ENCODE measurements at regions of chr12 and their contacts with region 1.

Region 1: DNA sequence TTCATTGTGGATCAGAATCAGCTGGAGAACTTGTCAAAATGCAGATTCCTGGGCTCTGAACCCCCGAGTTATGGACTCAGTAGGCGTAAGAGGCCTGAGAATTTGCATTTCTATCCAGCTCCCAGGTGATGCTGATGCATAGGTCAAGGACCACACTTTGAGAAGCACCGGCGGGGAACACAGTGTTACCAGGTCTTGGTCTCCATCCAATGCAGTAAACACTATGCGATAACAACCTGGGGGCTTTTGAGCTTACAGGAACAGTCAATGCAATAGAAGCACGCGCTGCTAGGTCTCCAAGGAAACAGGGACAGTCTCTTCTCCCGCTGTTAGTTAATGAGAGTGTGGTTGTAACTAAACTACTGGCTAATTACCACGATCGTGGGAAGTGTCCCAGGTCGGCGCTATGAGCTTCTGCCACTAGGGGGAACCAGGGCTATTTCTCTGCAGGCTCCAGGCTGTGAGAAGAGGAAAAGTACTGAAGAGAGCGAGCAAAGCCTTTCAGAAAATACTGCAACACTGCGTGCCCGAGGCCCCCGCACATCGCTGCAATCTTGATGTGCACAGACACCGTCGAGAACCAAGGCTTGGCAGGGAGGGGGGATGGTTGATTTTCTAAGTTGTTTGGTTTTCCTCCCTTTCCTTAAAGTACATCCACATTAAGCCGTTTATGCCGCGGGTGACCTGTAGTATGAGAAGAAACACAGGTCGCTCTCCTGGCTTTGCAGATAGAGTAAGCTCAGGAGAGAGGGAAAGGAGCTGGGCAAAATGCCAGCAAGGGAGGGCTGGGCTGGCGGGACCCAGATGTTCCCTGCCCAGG is 52.0 kb upstream of the KCNA1 start:
- DNase-seq: peak; percentile 68 to 74
- ATAC-seq: peak; percentile 78 to 90 (median 82)
- H3K4me3 ChIP-seq: peak overlapping the region; percentile 17
- H3K27ac ChIP-seq: no peak overlapping the region
- H3K4me1 ChIP-seq: peaks cover 10% of the 10 kb centered on the region
- H3K27me3 ChIP-seq: no peaks in the 10 kb centered on the region
- CTCF ChIP-seq: peak; percentile 79

Region 2: DNA sequence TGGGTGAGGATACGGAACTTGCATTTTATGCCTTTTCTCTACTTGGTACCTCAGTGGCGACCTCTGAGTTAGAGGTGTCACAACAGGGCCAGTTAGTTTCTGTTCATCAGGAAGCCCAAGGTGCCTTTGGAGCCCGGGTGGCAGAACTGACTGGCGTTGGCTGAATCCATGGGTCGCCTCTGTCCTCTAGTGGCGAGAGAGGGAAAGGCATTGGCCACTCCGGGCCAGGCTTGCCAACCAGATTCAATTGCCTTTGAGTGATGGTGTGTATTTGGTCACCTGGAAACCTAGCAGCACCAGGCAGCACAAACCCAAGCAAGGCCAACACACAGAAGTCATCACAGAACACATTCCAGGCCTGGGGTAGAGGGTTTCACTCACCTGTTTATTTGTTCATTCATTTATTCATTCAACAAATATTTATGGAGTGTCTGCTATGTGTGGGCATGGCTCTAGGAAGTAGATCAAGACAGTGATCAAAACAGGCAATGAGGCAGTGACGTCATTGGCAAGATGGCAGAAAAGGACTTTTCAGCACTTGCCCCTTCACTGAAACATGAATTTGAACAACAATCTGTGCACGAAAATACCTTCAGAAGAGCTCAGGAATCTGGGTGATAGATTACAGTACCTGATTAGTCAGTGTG is 145.5 kb after region 1 on chr12:
- intact Hi-C with region 1: loop called (anchors 1 to 2 kb)
- DNase-seq: peak; percentile 62 to 75
- ATAC-seq: peak; percentile 89 to 94 (median 91)
- H3K4me3 ChIP-seq: no peak overlapping the region
- H3K27ac ChIP-seq: no peak overlapping the region
- H3K4me1 ChIP-seq: peaks cover 4% of the 10 kb centered on the region
- H3K27me3 ChIP-seq: no peaks in the 10 kb centered on the region
- CTCF ChIP-seq: peak; percentile 93